Mammary epithelial cell (primary cell): ENCODE measurements at regions of chr22 and their contacts with region 1.

Region 1: DNA sequence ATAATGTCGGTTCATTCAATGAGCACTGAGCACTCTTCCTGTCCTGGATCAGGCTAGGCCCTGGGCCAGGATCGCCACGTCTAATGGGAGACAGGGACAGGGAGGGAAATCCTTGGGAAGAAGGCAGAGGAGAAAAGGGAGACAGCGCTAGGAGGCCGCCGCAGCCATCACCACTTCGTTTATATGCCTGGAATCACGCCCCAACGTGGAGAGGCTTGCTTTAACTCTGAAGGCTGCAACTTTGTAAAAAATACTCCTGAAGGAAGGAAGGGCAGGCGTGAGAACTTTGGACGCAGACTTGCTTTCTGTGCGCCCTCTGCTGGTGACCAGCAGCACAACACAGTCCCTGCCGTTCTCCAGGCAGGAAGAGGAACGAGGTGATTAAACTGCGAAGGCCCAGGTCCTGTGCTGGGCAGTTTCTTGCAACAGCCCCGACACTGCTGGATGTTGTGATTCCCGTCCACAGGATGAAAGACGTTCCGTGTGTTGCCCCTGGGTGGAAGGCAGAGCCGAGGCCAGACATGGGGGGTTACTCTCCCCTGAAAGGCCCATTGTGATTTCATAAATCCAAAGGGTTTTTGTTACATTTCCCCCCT is 22.1 kb downstream of the RIBC2 start:
- DNase-seq: peak; percentile 79
- H3K4me3 ChIP-seq: no peak overlapping the region
- H3K27ac ChIP-seq: no peak overlapping the region
- H3K4me1 ChIP-seq: no peaks in the 10 kb centered on the region
- H3K27me3 ChIP-seq: no peaks in the 10 kb centered on the region
- CTCF ChIP-seq: peak; percentile 94 to 97

Region 2: GRCh38 chr22:44975427-44976262 is 460.0 kb before region 1 on chr22:
- CTCF ChIA-PET with region 1: no interaction called
- dilution Hi-C with region 1: no loop called
- in situ Hi-C with region 1: no loop called
- intact Hi-C with region 1: loop called (anchors 5 kb)
- DNase-seq: peak; percentile 68
- H3K4me3 ChIP-seq: no peak overlapping the region
- H3K27ac ChIP-seq: no peak overlapping the region
- H3K4me1 ChIP-seq: no peaks in the 10 kb centered on the region
- H3K27me3 ChIP-seq: peaks cover 3% of the 10 kb centered on the region
- CTCF ChIP-seq: peak; percentile 62 to 85

Region 3: DNA sequence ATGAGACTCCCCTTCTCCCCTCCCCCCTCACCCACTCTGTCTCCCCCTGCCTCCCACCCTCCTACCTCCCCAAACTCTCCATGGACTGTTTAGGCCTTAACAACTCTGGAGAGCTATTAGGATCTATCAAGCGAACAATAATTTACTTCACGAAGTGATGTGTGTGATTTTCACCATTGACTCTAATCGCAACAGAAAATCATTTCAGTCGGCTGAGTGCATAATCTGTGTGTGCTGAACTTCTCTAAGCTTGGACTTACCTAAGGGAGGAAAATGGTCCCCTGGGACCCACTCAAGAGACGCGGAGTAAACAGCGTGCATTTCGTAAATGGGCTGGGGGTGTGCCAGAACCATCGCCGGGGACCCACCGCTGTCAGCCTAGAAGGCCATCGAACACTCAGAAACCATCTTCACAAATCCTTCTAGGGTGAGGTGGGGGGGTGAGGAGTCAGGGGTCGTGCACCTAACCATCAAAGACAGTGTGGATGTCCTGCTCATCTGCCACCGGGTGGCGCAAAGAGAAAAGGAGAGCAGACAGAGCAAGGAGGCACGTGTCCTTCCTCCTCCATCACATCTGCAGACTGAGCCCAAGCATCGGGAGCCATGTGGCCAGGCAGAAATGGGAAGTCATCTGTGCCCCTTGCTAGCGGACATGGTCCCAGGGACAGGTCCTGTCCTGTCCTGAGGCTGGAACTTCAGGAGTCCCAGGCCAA is 334.0 kb before region 1 on chr22:
- CTCF ChIA-PET with region 1: no interaction called
- dilution Hi-C with region 1: no loop called
- in situ Hi-C with region 1: no loop called
- intact Hi-C with region 1: loop called (anchors 1 kb)
- DNase-seq: peak; percentile 15
- H3K4me3 ChIP-seq: no peak overlapping the region
- H3K27ac ChIP-seq: no peak overlapping the region
- H3K4me1 ChIP-seq: peaks cover 12% of the 10 kb centered on the region
- H3K27me3 ChIP-seq: no peaks in the 10 kb centered on the region
- CTCF ChIP-seq: peak; percentile 66 to 81

Region 4: DNA sequence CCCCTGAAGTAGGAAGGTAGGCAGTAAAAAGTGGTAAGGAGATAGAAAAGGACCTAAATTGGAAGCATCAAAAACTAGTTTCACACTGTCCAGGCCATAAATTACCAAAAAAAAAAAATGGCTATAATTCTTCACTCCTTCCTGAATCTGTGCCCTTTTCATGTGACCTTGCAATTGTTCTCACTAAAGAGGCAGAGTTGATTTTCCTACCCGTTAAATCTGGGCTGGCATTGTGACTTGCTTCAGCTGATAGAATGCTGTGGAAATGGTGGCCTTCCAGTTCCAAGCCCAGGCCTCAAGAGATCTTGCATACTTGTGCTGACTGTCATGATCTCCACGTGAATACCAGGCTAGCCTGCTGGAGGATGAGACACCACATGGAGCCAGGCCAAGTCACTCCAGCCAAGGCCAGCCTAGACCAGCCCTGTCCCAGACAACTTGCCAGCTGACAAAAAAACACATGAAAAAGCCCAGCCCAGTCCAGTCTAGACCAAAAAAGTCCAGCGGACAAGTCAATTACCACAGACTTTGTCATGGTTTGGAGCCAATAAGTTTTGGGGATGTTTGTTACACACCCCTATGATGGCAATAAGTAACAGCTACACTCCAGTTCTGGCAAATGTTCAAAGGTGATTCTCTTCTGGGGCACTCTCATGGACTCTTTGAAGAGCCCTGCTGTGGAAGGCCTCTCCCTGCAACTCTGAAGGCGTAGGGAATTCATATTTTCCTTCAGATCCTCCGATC is 323.3 kb before region 1 on chr22:
- CTCF ChIA-PET with region 1: no interaction called
- dilution Hi-C with region 1: no loop called
- in situ Hi-C with region 1: no loop called
- intact Hi-C with region 1: no loop called
- DNase-seq: peak; percentile 84
- H3K4me3 ChIP-seq: no peak overlapping the region
- H3K27ac ChIP-seq: no peak overlapping the region
- H3K4me1 ChIP-seq: peaks cover 6% of the 10 kb centered on the region
- H3K27me3 ChIP-seq: no peaks in the 10 kb centered on the region
- CTCF ChIP-seq: no peak

Region 5: GRCh38 chr22:45317551-45318167 is 118.0 kb before region 1 on chr22:
- CTCF ChIA-PET with region 1: no interaction called
- dilution Hi-C with region 1: no loop called
- in situ Hi-C with region 1: no loop called
- intact Hi-C with region 1: loop called (anchors 1 kb)
- DNase-seq: peak; percentile 70
- H3K4me3 ChIP-seq: peak overlapping the region in 1 of 3 experiments; percentile 11
- H3K27ac ChIP-seq: peak overlapping the region; percentile 71
- H3K4me1 ChIP-seq: peaks cover 26% of the 10 kb centered on the region
- H3K27me3 ChIP-seq: no peaks in the 10 kb centered on the region
- CTCF ChIP-seq: peak; percentile 44 to 65

Region 6: DNA sequence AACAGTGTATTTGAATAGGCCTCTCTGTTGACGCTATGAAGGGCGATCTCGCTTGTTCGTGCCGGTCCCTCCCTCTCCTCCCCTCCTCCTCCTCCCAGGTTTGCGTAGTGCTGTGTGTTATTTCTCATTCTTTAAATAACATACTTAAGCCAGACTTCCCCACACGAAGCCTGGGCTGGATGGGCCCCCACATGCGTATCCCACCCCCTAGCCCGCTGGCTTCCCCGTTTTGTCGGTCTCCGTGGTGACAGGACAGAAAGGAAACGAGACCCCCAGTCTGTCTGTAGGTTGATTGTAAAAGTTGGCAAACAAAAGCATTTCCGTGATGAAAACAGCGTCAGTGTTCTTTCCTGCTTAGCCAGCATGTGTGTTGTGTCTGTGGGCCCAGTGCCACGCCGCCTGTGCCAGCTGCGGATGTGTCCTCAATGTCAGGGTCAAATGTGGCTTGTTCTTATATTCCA is 98.6 kb before region 1 on chr22:
- CTCF ChIA-PET with region 1: interaction called, 4 read pairs
- dilution Hi-C with region 1: no loop called
- in situ Hi-C with region 1: no loop called
- intact Hi-C with region 1: loop called (anchors 1 kb)
- DNase-seq: no peak
- H3K4me3 ChIP-seq: no peak overlapping the region
- H3K27ac ChIP-seq: no peak overlapping the region
- H3K4me1 ChIP-seq: peaks cover 24% of the 10 kb centered on the region
- H3K27me3 ChIP-seq: no peaks in the 10 kb centered on the region
- CTCF ChIP-seq: no peak